Panc1 (cell line): ENCODE measurements at regions of chr16 and their contacts with region 1.

Region 1: GRCh38 chr16:31117391-31118197 is at the start of gene KAT8:
- DNase-seq: peak; percentile 85
- ATAC-seq: peak; percentile 97
- H3K4me3 ChIP-seq: peak within 1 kb of the TSS; percentile 62 to 95
- H3K27ac ChIP-seq: peak within 1 kb of the TSS; percentile 79
- H3K4me1 ChIP-seq: peaks cover 19% of the 10 kb centered on the region
- H3K27me3 ChIP-seq: no peaks in the 10 kb centered on the region
- CTCF ChIP-seq: no peak
- total RNA-seq, gene KAT8: 48.3 TPM

Region 2: DNA sequence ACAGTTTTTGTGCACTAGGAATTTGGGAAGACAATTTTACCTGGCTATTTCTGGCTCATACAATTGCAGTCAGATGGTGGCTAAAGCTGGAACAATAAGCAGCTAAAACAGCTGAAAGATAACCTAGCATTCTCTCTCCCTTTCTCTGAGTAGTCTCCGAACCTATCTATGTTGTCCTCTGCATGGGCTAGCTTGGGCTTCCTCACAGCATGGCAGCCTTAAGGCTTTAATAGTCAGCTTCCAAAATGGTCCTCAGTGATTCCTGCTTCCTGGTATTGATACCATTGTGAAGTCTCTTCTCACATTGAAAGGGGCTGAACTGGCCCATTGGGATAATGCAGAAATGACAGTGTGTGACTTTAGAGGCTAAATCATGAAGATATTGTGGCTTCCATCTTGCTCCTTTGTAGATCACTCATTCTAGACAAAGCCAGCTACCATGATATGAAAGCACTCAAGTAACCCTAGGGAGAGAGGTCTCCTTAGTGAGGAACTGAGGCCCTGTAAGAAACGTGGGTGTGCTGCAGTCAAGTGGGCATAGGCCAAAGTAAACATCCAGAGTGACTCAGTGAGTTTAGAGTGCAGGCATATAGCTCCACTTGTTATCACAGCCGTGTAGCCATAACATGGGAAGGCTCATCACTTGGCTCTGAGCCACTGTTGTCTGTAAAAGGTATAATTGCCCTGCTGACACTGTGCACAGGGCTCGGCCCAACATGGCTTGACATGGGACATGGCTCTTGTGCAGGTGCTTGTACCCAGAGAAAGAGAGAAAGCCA is 17.5 kb before region 1 on chr16:
- CTCF ChIA-PET with region 1: no interaction called
- POLR2A ChIA-PET with region 1: interaction called, 10 read pairs
- in situ Hi-C with region 1: no loop called
- intact Hi-C with region 1: no loop called
- DNase-seq: no peak
- ATAC-seq: no peak
- H3K4me3 ChIP-seq: no peak overlapping the region
- H3K27ac ChIP-seq: no peak overlapping the region
- H3K4me1 ChIP-seq: peaks cover 3% of the 10 kb centered on the region; the same call in 1 of the 2 replicates
- H3K27me3 ChIP-seq: no peaks in the 10 kb centered on the region
- CTCF ChIP-seq: no peak

Region 3: GRCh38 chr16:31202414-31203375 is 85.1 kb after region 1 on chr16 and contains the start of gene PYCARD:
- CTCF ChIA-PET with region 1: no interaction called
- POLR2A ChIA-PET with region 1: no interaction called
- in situ Hi-C with region 1: no loop called
- intact Hi-C with region 1: no loop called
- DNase-seq: no peak
- ATAC-seq: peak; percentile 64
- H3K4me3 ChIP-seq: peak within 1 kb of the TSS; percentile 51 to 69
- H3K27ac ChIP-seq: peak within 1 kb of the TSS; percentile 71
- H3K4me1 ChIP-seq: peaks cover 22% of the 10 kb centered on the region
- H3K27me3 ChIP-seq: no peaks in the 10 kb centered on the region
- CTCF ChIP-seq: no peak
- total RNA-seq, gene PYCARD: 99.4 TPM